ENCODE measurements at regions of chr9 and their contacts with region 1.

Region 1: GRCh38 chr9:33737811-33738606 is 57.4 kb upstream of the PRSS3 start:
- DNase-seq: peak; percentile 29
- H3K4me3 ChIP-seq: no peak overlapping the region
- H3K27ac ChIP-seq: no peak overlapping the region
- H3K27me3 ChIP-seq: no peaks in the 10 kb centered on the region
- CTCF ChIP-seq: peak; percentile 86

Region 2: DNA sequence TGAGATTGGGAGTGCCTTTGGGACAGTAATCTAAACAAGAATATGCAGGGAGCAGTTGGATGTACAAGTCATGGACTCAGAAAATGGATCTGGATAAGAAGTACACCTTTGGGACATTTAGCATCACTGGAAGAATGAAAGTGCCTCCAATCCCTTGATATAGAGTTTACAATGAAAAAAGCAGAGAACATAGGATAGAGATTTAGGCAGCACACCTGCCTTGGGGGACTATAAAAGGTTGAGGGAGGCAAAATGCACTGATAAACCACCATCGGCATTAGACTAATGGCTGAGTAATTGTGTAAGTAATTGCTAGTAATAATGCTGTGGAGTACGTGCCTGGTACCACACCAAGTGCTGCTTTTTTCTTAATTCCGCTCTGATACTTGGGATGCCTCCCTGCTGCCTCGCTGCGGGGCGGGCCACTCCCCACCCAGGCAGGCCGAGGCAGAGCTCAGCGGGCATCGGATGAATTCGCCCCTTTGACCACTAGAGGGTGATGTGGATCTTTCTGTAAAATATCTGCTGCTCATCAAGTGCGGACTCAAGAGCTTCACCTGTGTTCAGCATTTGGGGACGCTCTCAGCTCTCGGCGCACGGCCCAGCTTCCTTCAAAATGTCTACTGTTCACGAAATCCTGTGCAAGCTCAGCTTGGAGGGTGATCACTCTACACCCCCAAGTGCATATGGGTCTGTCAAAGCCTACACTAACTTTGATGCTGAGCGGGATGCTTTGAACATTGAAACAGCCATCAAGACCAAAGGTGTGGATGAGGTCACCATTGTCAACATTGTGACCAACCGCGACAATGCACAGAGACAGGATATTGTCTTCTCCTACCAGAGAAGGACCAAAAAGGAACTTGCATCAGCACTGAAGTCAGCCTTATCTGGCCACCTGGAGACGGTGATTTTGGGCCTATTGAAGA is 114.1 kb before region 1 on chr9:
- CTCF ChIA-PET with region 1: interaction called, 20 read pairs
- POLR2A ChIA-PET with region 1: no interaction called
- DNase-seq: peak; percentile 33
- H3K4me3 ChIP-seq: no peak overlapping the region
- H3K27ac ChIP-seq: no peak overlapping the region
- H3K27me3 ChIP-seq: peaks cover 2% of the 10 kb centered on the region
- CTCF ChIP-seq: peak; percentile 78

Region 3: DNA sequence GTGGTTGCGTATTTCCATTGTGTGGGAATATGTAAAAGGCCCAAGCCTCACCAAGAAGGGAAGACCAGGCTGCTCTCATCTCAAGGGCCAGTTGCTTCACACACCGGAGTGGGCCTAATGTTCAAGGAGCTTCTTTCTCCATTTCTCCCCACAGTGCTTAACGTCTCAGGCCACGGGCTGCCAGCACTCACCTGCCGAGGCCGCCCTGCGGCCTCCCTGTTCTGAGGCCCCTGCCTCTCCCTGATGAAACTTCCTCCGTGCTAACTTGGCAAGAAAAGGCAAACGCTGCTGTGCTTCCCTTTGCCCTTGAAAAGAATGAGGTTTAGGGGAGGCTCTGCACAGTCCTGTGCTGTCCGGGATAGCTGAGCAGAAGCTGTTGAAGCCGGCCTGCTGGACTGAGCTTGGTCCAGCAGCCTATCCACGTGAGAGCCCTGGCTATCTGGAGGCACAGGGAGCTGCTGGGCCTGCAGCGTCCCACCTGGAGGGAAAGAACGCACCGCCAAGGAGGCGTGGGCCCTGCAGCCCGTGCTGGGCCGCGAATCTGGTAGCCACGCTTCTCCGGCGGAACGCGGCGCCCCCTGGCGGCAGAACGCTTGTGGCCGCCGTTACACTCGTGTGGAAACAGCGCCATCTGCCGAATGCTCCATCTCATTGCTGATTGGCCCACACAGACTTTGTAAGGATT is 16.2 kb before region 1 on chr9:
- CTCF ChIA-PET with region 1: interaction called, 12 read pairs
- POLR2A ChIA-PET with region 1: no interaction called
- DNase-seq: peak; percentile 59
- H3K4me3 ChIP-seq: no peak overlapping the region
- H3K27ac ChIP-seq: no peak overlapping the region
- H3K27me3 ChIP-seq: peaks cover 9% of the 10 kb centered on the region
- CTCF ChIP-seq: peak; percentile 99

Region 4: DNA sequence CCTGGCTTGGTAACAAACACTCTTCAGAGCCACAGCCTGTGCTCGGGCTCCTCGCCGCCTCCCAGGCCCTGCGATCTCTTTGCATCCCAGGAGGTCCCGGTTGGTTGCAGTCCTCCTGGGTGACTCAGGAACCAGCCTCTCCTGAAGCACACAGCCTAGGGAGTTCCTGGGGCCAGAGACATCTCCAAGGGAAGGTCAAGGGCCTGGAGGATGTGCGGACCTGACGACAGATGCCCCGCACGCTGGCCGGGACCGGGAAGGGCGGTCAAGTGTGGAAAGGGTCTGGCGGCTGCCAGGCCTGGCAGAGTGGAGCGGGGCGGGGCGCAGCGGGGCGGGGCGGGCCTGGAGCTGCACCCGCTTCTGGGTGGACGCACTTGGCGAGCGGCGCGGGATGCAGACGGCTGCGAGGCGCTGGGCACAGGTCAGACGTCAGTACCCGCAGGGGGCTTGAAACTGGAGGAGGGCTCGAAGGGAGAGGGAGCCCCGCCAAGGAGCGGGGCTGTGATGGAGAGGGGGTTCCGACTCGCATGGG is 12.4 kb after region 1 on chr9:
- CTCF ChIA-PET with region 1: interaction called, 14 read pairs
- POLR2A ChIA-PET with region 1: no interaction called
- DNase-seq: no peak
- H3K4me3 ChIP-seq: peak overlapping the region; percentile 58
- H3K27ac ChIP-seq: no peak overlapping the region
- H3K27me3 ChIP-seq: peaks cover 13% of the 10 kb centered on the region
- CTCF ChIP-seq: no peak

Region 5: GRCh38 chr9:33800886-33801285 is 62.9 kb after region 1 on chr9:
- CTCF ChIA-PET with region 1: no interaction called
- POLR2A ChIA-PET with region 1: no interaction called
- DNase-seq: no peak
- H3K4me3 ChIP-seq: no peak overlapping the region
- H3K27ac ChIP-seq: no peak overlapping the region
- H3K27me3 ChIP-seq: peaks cover 6% of the 10 kb centered on the region
- CTCF ChIP-seq: no peak